Mammary epithelial cell (primary cell): ENCODE measurements at regions of chr1 and their contacts with region 1.

Region 1: GRCh38 chr1:32964461-32965250 is at the start of gene RNF19B:
- DNase-seq: peak; percentile 97
- H3K4me3 ChIP-seq: peak within 1 kb of the TSS; percentile 85 to 99 (median 96)
- H3K27ac ChIP-seq: peak within 1 kb of the TSS; percentile 87
- H3K4me1 ChIP-seq: peaks cover 43% of the 10 kb centered on the region
- H3K27me3 ChIP-seq: no peaks in the 10 kb centered on the region
- CTCF ChIP-seq: no peak
- total RNA-seq, gene RNF19B: 30.5 to 62.4 TPM

Region 2: GRCh38 chr1:32953495-32953894 is 11.2 kb before region 1 on chr1:
- CTCF ChIA-PET with region 1: interaction called, 3 read pairs
- dilution Hi-C with region 1: no loop called
- in situ Hi-C with region 1: no loop called
- intact Hi-C with region 1: loop called (anchors 1 kb)
- DNase-seq: peak; percentile 91
- H3K4me3 ChIP-seq: no peak overlapping the region
- H3K27ac ChIP-seq: peak overlapping the region; percentile 89
- H3K4me1 ChIP-seq: peaks cover 40% of the 10 kb centered on the region
- H3K27me3 ChIP-seq: no peaks in the 10 kb centered on the region
- CTCF ChIP-seq: no peak

Region 3: GRCh38 chr1:32981003-32981901 is 16.6 kb after region 1 on chr1:
- CTCF ChIA-PET with region 1: interaction called, 3 read pairs
- dilution Hi-C with region 1: no loop called
- in situ Hi-C with region 1: no loop called
- intact Hi-C with region 1: loop called (anchors 1 kb)
- DNase-seq: peak; percentile 99
- H3K4me3 ChIP-seq: no peak overlapping the region
- H3K27ac ChIP-seq: peak overlapping the region; percentile 97
- H3K4me1 ChIP-seq: peaks cover 15% of the 10 kb centered on the region
- H3K27me3 ChIP-seq: no peaks in the 10 kb centered on the region
- CTCF ChIP-seq: no peak

Region 4: GRCh38 chr1:32992489-32993323 is 28.1 kb after region 1 on chr1:
- CTCF ChIA-PET with region 1: no interaction called
- dilution Hi-C with region 1: no loop called
- in situ Hi-C with region 1: no loop called
- intact Hi-C with region 1: loop called (anchors 1 kb)
- DNase-seq: peak; percentile 100
- H3K4me3 ChIP-seq: no peak overlapping the region
- H3K27ac ChIP-seq: peak overlapping the region; percentile 95
- H3K4me1 ChIP-seq: peaks cover 60% of the 10 kb centered on the region
- H3K27me3 ChIP-seq: no peaks in the 10 kb centered on the region
- CTCF ChIP-seq: no peak